ENCODE measurements at regions of chr4 and their contacts with region 1.

Region 1: DNA sequence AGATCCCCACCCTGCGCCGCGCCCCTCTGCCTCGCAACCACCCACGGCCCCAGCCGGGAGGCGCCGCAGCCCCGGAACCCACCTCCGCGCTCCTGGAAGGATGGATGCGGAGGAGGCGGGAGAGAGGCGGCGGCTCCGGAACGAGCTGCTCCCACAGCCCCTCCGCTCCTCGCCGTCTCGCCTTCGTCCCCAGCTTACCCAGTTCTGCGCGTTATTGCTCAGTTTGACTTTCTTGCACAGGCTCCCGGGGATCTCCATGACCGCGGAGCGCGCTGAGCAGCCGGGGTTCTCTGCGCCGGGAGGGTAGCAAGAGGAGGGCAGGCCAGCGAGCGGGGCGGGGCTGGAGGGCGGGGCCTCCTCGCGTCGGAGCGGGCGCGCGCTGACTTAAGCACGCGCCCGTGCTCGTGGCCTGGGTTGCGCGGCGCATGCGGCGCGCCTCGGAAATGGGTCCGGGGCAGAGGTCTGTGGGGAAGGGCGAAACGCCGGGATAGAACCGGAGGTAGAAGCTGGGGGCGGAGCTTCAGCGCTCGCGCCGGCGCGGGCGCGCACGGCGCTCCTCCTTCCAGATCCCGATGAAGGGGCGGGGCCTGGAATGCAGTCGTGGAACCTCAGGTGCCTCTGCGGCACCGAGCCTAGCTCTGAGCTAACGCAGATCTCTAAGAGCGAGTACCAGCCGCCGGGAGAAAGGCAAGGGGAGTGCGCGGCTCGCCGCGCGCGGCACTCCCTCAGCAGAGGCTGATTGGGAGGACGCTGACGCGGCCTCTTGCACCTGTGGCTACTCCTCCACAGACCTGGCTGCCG is at the start of gene PAPSS1:
- DNase-seq: peak; percentile 97 to 98
- H3K4me3 ChIP-seq: peak within 1 kb of the TSS; percentile 87 to 89
- H3K27ac ChIP-seq: peak within 1 kb of the TSS; percentile 88 to 95
- H3K4me1 ChIP-seq: peaks cover 0 to 26% (median 9%) of the 10 kb centered on the region in 4 donors
- H3K27me3 ChIP-seq: no peaks in the 10 kb centered on the region
- CTCF ChIP-seq: no peak

Region 2: GRCh38 chr4:107824353-107825071 is 104.4 kb after region 1 on chr4 and contains the start of gene SGMS2:
- intact Hi-C with region 1: loop called (anchors 5 kb)
- DNase-seq: peak; percentile 91 to 95
- H3K4me3 ChIP-seq: peak within 1 kb of the TSS; percentile 87 to 92
- H3K27ac ChIP-seq: peak within 1 kb of the TSS; percentile 90 to 94
- H3K4me1 ChIP-seq: peaks cover 0 to 30% (median 18%) of the 10 kb centered on the region in 4 donors
- H3K27me3 ChIP-seq: no peaks in the 10 kb centered on the region
- CTCF ChIP-seq: no peak

Region 3: DNA sequence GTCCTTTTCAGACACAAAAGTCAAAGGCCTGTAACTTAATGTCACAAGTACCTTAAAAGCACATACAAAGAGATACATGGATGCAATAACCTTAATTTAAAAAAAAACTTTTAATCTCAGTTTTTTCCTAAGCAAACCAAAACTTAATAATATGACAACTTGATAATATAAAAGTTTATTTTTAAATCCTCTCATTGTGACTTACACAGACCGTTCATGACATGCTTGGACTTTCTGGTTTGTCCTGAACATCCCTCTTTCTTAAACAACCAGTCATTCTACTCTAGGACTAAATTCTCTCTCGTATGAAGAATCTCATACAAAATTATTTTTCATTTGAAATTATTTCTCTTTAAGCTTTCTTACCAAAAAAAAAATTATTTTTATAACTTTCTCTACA is 168.1 kb after region 1 on chr4:
- intact Hi-C with region 1: no loop called
- DNase-seq: no peak
- H3K4me3 ChIP-seq: no peak overlapping the region
- H3K27ac ChIP-seq: no peak overlapping the region
- H3K4me1 ChIP-seq: no peaks in the 10 kb centered on the region
- H3K27me3 ChIP-seq: no peaks in the 10 kb centered on the region
- CTCF ChIP-seq: no peak

Region 4: DNA sequence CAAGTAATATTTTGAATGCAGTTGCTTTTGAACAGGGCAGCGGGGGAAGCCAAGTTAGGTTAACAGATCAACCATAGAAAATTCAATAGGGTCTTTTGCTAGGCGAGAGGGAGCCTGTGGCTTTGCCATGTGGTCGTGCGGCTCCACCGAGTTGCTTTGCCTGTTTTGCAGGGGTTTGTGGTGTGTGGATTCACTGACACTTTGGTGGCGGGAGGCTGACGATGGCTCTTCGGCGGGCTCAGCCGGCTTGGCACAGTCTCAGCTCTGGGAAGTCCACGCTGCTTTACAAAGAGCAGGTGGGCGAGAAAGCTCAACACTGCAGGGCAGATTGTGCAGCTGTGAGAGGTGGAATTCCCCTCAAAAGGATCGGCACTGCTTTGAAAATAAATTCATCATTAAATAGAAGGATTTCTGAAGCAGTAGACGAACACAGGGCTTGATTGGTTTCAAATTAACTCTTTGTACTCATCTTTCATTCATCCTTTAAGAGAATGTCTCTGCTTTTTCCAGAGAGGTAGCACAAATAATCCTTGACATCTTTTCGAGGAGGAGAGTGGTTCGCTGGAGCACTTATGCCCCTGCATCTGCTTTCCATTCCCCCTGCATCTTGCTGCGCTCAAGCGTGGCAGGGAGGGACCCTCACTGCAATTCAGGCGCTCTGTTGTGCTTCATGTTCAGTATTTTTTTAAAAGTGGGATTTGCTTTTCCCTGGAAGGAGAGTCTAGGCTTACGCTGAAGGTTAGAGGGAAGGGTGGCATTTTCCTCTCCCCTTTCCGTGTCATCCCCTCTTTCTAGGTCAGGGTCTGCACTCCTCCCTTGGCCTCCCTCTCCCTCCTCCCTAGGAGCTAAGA is 650.4 kb after region 1 on chr4:
- intact Hi-C with region 1: no loop called
- DNase-seq: no peak
- H3K4me3 ChIP-seq: no peak overlapping the region
- H3K27ac ChIP-seq: no peak overlapping the region
- H3K4me1 ChIP-seq: no peaks in the 10 kb centered on the region
- H3K27me3 ChIP-seq: peaks cover 0 to 26% of the 10 kb centered on the region in 2 donors
- CTCF ChIP-seq: no peak

Region 5: DNA sequence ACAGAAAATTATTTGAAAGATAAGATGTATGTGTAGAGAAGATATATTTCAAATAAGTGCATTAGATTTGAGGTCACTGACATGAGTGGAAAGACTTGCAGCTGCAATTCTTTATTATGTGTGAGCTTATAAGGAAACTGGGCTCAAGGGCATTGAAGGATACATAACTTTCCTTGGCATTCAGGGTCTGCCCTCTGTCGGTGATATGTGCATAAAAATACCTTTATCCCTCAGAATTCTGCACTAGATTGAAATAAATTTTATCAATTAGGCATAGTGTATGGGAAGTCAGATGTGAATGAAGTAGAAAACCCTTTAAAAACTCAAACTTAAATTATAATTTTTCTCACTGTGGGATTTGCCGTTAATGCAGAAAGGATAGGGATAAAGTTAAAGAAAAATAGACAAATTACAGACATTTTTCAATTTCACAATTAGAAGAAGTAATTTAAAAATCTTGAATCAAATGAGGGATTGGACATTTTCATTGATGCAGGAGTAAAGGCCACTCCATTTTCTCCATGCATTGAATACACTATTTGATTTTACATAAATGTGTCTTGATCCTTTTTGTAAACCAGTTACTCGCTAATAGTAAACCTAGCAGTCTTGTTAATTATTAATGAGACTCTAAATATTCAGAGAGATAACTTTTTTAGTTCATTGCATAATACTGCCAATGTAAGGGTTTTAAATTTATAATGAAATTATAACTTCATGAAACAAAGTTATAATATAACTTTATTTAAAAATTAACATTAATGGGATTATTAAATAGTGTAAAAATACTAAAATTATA is 1063.7 kb after region 1 on chr4:
- intact Hi-C with region 1: no loop called
- DNase-seq: no peak
- H3K4me3 ChIP-seq: no peak overlapping the region
- H3K27ac ChIP-seq: no peak overlapping the region
- H3K4me1 ChIP-seq: no peaks in the 10 kb centered on the region
- H3K27me3 ChIP-seq: no peaks in the 10 kb centered on the region
- CTCF ChIP-seq: no peak

Measured in tibial artery (tissue), 4 donors.